ENCODE measurements at regions of chr11 and their contacts with region 1.

Region 1: GRCh38 chr11:49533204-49533603 is 324.8 kb upstream of the FOLH1 start:
- DNase-seq: no peak
- H3K4me3 ChIP-seq: no peak overlapping the region
- H3K4me3 Mint-ChIP-seq: no peak overlapping the region
- H3K27ac Mint-ChIP-seq: no peak overlapping the region
- H3K4me1 ChIP-seq: no peaks in the 10 kb centered on the region
- H3K4me1 Mint-ChIP-seq: no peaks in the 10 kb centered on the region
- H3K27me3 ChIP-seq: no peaks in the 10 kb centered on the region
- H3K27me3 Mint-ChIP-seq: no peaks in the 10 kb centered on the region
- CTCF ChIP-seq: no peak

Region 2: DNA sequence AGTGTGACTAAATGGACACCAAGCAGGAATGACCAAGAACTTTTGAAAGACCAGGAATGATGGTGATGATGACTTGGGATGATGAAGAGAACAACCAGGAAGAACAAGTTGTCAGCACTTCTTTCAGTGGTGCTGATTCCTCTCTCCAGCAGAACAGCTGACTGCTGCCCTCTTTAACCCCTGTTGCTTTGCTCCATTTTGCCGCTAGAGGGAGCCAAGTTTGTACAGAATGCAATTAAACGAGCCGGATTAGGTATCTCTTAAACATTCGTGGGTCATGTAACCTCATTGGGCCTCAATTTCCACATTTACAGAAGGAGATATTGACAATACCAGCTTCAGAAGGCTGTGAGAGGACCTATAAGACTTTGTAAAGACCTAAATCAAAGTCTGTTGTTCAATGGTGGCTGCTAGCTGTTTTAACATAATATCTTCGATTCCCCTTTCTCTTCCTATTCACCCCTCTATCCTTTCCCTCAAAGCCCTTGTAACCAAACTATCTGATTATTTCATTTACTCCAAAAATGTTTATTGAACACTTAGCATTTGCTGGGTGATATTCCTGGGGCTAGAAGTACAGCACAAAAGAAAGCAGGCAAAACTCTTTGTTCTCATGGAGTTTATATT is 1225.3 kb before region 1 on chr11:
- CTCF ChIA-PET with region 1: no interaction called
- POLR2A ChIA-PET with region 1: no interaction called
- intact Hi-C with region 1: loop called (anchors 10 kb)
- DNase-seq: peak; percentile 63 to 78
- H3K4me3 ChIP-seq: no peak overlapping the region
- H3K4me3 Mint-ChIP-seq: no peak overlapping the region
- H3K27ac Mint-ChIP-seq: no peak overlapping the region
- H3K4me1 ChIP-seq: no peaks in the 10 kb centered on the region
- H3K4me1 Mint-ChIP-seq: no peaks in the 10 kb centered on the region
- H3K27me3 ChIP-seq: no peaks in the 10 kb centered on the region
- H3K27me3 Mint-ChIP-seq: no peaks in the 10 kb centered on the region
- CTCF ChIP-seq: peak; percentile 85 to 92

Region 3: GRCh38 chr11:49405743-49406142 is 127.5 kb before region 1 on chr11:
- CTCF ChIA-PET with region 1: no interaction called
- POLR2A ChIA-PET with region 1: no interaction called
- intact Hi-C with region 1: no loop called
- DNase-seq: no peak
- H3K4me3 ChIP-seq: no peak overlapping the region
- H3K4me3 Mint-ChIP-seq: no peak overlapping the region
- H3K27ac Mint-ChIP-seq: no peak overlapping the region
- H3K4me1 ChIP-seq: no peaks in the 10 kb centered on the region
- H3K4me1 Mint-ChIP-seq: no peaks in the 10 kb centered on the region
- H3K27me3 ChIP-seq: no peaks in the 10 kb centered on the region
- H3K27me3 Mint-ChIP-seq: peaks cover 3% of the 10 kb centered on the region
- CTCF ChIP-seq: no peak

Region 4: GRCh38 chr11:49432242-49432848 is 100.9 kb before region 1 on chr11:
- CTCF ChIA-PET with region 1: no interaction called
- POLR2A ChIA-PET with region 1: no interaction called
- intact Hi-C with region 1: no loop called
- DNase-seq: no peak
- H3K4me3 ChIP-seq: no peak overlapping the region
- H3K4me3 Mint-ChIP-seq: no peak overlapping the region
- H3K27ac Mint-ChIP-seq: no peak overlapping the region
- H3K4me1 ChIP-seq: no peaks in the 10 kb centered on the region
- H3K4me1 Mint-ChIP-seq: no peaks in the 10 kb centered on the region
- H3K27me3 ChIP-seq: no peaks in the 10 kb centered on the region
- H3K27me3 Mint-ChIP-seq: no peaks in the 10 kb centered on the region
- CTCF ChIP-seq: no peak

Region 5: GRCh38 chr11:49995565-49995964 is 462.4 kb after region 1 on chr11:
- CTCF ChIA-PET with region 1: no interaction called
- POLR2A ChIA-PET with region 1: no interaction called
- intact Hi-C with region 1: loop called (anchors 5 kb)
- DNase-seq: peak; percentile 40 to 50
- H3K4me3 ChIP-seq: no peak overlapping the region
- H3K4me3 Mint-ChIP-seq: no peak overlapping the region
- H3K27ac Mint-ChIP-seq: no peak overlapping the region
- H3K4me1 ChIP-seq: no peaks in the 10 kb centered on the region
- H3K4me1 Mint-ChIP-seq: no peaks in the 10 kb centered on the region
- H3K27me3 ChIP-seq: no peaks in the 10 kb centered on the region
- H3K27me3 Mint-ChIP-seq: no peaks in the 10 kb centered on the region
- CTCF ChIP-seq: peak; percentile 34 to 55